Mucosa of descending colon (tissue), 3 donors: ENCODE measurements at regions of chr18 and their contacts with region 1.

Region 1: GRCh38 chr18:63111671-63112402 is 207.7 kb downstream of the BCL2 start:
- DNase-seq: peak in 1 of 3 donors; percentile 36
- ATAC-seq: peak; percentile 65
- H3K4me3 ChIP-seq: no peak overlapping the region
- H3K4me1 ChIP-seq: no peaks in the 10 kb centered on the region
- CTCF ChIP-seq: no peak

Region 2: GRCh38 chr18:63025251-63026090 is 86.4 kb before region 1 on chr18:
- intact Hi-C with region 1: no loop called
- DNase-seq: peak in 2 of 3 donors; percentile 54 to 59
- ATAC-seq: peak; percentile 59
- H3K4me3 ChIP-seq: no peak overlapping the region
- H3K4me1 ChIP-seq: no peaks in the 10 kb centered on the region
- CTCF ChIP-seq: no peak

Region 3: DNA sequence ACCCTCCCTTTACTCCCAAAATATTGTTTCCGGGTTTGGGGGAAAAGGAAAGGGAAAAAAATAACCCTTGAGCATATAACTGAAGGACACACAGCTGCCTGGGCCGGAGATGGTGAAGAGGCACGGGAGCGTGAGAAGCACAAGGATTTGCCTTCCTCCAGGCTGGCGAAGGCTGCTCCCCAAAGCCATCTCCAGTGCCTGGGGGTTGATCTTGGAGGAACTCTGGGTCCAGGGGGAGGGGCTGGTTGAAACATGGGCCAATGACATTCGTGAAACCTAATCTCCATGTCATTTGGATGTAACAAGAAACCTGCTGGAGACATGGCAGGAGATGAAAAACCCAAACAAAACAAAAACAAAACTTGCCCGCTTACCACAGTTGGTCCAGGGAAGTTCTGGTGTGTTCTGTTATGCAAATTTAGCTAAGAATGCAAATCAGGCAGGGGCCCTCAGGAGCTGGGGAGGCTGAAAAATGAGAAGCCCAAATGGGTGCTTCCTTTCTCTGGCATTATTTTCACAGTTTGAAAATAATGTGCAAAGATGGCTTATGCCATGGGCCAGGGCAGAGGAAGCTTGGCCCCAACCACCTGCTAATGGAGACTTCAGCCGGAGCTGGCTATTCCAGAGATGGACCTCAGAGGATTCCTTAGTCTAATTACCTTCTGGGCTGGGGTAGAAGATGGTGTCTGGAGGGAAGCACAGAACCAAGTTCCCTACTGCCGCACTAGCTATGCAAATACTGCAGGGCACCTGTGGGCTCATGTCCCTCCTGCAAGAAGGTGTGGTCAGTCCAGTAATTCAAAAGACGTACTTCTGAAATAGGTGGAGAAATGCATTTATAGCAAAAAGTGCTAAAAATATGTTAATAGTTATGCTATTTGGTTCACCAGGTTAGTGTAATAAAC is 26.9 kb after region 1 on chr18:
- intact Hi-C with region 1: loop called in 1 of 2 experiments (anchors 2 kb)
- DNase-seq: peak in 1 of 3 donors; percentile 25
- ATAC-seq: peak; percentile 38
- H3K4me3 ChIP-seq: no peak overlapping the region
- H3K4me1 ChIP-seq: peaks cover 10% of the 10 kb centered on the region
- CTCF ChIP-seq: no peak